ENCODE measurements at regions of chr7 and their contacts with region 1.

Region 1: DNA sequence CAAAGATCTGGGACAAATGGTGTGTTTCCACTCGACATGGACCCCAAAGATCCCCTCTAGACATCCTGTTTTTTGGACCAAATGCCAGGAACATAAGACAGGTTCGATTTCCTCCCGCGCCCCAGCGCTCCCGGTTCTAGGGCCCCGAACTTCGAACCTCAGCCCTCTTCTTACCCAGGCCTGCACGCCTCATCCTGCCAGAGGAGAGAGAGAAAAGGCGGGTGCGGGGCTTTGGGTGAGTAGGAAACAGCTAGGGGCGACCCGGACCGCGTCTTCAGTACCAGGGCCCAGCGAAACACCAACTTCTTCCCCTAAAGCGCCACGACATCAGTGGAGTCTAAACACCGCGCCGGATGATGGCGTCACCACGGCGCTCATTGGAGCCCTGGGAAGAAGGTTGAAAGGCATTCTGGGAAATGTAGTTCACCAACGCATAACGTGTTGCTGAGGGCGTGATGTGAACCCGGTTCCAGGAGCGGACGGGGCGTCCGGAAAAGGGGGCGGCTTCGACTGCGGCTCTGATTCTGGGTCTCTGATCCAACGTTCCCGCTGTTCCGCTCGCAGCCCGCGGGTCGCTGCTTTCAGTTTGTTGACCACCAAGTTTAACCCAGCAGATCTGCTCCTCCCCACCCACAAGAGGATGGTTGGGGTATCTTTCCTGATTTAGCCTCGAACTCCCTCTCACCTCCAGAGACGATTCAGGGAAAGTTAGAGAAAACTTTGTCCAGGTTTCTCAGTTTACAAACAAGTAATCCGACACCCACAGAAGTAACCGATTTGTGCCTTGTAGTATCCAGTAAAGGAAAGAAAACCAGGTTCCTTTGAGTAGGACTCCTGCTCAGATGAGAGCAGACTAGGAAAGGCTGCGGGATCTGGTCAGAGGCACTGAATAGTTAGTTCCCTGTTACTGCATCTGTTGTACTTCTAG is at the start of gene BET1:
- DNase-seq: peak; percentile 95
- ATAC-seq: peak; percentile 96
- H3K4me3 Mint-ChIP-seq: peak within 1 kb of the TSS; percentile 98
- H3K27ac Mint-ChIP-seq: peak within 1 kb of the TSS; percentile 97
- H3K4me1 Mint-ChIP-seq: peaks cover 36% of the 10 kb centered on the region
- H3K27me3 Mint-ChIP-seq: peaks cover 6% of the 10 kb centered on the region
- total RNA-seq, gene BET1: 16.9 to 19.8 TPM

Region 2: GRCh38 chr7:92134271-92135051 is 1869.8 kb before region 1 on chr7 and contains the start of gene CYP51A1:
- CTCF ChIA-PET with region 1: no interaction called
- POLR2A ChIA-PET with region 1: no interaction called
- intact Hi-C with region 1: loop called in 1 of 2 experiments (anchors 10 kb)
- DNase-seq: peak; percentile 94
- ATAC-seq: peak; percentile 92
- H3K4me3 Mint-ChIP-seq: peak within 1 kb of the TSS; percentile 98
- H3K27ac Mint-ChIP-seq: peak within 1 kb of the TSS; percentile 99
- H3K4me1 Mint-ChIP-seq: peaks cover 20% of the 10 kb centered on the region
- H3K27me3 Mint-ChIP-seq: no peaks in the 10 kb centered on the region
- total RNA-seq, gene CYP51A1: 57.8 to 63.3 TPM

Region 3: GRCh38 chr7:92245487-92246362 is 1758.6 kb before region 1 on chr7 and contains the starts of genes ANKIB1 and KRIT1:
- CTCF ChIA-PET with region 1: no interaction called
- POLR2A ChIA-PET with region 1: no interaction called
- intact Hi-C with region 1: loop called in 1 of 2 experiments (anchors 10 kb)
- DNase-seq: peak; percentile 93
- ATAC-seq: peak; percentile 81
- H3K4me3 Mint-ChIP-seq: peak within 1 kb of the TSS; percentile 97
- H3K27ac Mint-ChIP-seq: peak within 1 kb of the TSS; percentile 98
- H3K4me1 Mint-ChIP-seq: peaks cover 26% of the 10 kb centered on the region
- H3K27me3 Mint-ChIP-seq: no peaks in the 10 kb centered on the region
- total RNA-seq, gene ANKIB1: 37.0 to 55.1 TPM
- total RNA-seq, gene KRIT1: 37.7 to 45.5 TPM

Region 4: DNA sequence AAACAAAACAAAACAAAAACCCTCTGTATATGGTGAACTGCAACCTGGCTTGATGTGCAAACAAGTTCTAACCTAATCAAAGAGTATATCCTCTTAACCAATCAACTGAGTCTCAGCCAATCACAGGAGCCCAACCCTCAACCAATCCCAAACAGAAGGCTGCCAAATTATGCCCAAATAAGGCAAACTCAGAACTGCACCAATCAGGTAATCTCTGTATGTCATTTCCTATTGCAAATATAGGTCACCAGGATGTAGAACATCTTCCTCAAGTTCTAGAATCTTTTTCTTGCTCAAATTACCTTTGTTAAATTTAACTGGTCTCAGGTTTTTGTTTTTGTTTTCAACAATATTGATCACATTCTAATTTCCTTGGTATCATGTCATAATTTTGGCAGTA is 1419.3 kb before region 1 on chr7:
- CTCF ChIA-PET with region 1: no interaction called
- POLR2A ChIA-PET with region 1: no interaction called
- intact Hi-C with region 1: loop called in 1 of 2 experiments (anchors 10 kb)
- DNase-seq: peak; percentile 20
- ATAC-seq: peak; percentile 20
- H3K4me3 Mint-ChIP-seq: no peak overlapping the region
- H3K27ac Mint-ChIP-seq: peak overlapping the region; percentile 83
- H3K4me1 Mint-ChIP-seq: peaks cover 65% of the 10 kb centered on the region
- H3K27me3 Mint-ChIP-seq: no peaks in the 10 kb centered on the region

Region 5: DNA sequence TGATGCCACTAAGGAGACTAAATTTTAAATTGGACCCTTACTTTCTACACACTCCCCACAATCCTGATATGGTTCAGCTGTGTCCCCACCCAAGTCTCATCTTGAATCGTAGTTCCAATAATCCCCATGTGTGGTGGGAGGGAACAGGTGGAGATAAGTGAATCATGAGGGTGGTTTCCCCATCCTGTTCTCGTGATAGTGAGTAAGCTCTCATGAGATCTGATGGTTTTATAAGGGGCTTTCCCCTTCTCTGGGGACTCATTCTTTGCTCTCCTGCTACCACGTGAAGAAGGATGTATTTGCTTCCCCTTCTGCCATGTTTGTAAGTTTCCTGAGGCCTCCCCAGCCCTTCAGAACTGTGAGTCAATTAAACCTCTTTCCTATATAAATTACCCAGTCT is 18.3 kb after region 1 on chr7:
- CTCF ChIA-PET with region 1: no interaction called
- POLR2A ChIA-PET with region 1: no interaction called
- intact Hi-C with region 1: loop called (anchors 1 to 2 kb)
- DNase-seq: peak; percentile 24
- ATAC-seq: peak; percentile 98
- H3K4me3 Mint-ChIP-seq: no peak overlapping the region
- H3K27ac Mint-ChIP-seq: no peak overlapping the region
- H3K4me1 Mint-ChIP-seq: peaks cover 12% of the 10 kb centered on the region
- H3K27me3 Mint-ChIP-seq: peaks cover 14% of the 10 kb centered on the region

Region 6: DNA sequence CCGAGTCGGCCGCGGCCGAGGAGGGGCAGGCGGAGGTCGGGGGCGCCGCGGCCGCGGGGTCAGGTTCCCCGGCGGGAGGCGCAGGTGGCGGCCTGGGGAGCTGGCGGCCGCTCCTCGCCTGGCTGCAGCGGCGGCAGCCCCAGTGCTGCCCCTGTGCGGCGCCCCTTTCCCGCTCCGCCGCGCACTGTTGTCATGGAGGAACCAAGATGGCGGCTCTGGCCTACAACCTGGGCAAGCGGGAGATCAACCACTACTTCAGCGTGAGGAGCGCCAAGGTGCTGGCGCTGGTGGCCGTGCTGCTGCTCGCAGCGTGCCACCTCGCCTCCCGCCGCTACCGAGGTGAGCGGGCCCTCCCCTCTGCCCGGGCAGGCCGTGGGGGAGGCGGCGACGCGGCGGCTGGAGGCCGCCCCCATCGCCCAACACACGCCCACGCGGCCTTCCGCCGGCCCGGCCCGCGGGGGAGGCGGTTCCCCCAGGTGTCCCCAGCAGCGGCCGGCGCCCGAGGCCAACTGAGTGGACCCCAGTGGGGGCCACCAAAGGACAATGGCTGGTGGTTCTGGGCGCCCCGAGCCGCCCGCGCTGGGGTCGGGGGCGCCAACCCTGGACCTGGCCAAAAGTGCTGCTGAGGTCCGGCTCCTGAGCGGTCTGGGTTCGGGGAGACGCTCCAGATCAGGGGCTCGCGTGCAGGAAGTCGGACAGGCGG is 505.7 kb after region 1 on chr7:
- CTCF ChIA-PET with region 1: no interaction called
- POLR2A ChIA-PET with region 1: no interaction called
- intact Hi-C with region 1: loop called in 1 of 2 experiments (anchors 2 kb)
- DNase-seq: peak; percentile 81
- ATAC-seq: peak; percentile 77
- H3K4me3 Mint-ChIP-seq: peak overlapping the region; percentile 80
- H3K27ac Mint-ChIP-seq: peak overlapping the region; percentile 93
- H3K4me1 Mint-ChIP-seq: peaks cover 43% of the 10 kb centered on the region
- H3K27me3 Mint-ChIP-seq: no peaks in the 10 kb centered on the region

Region 7: GRCh38 chr7:94657771-94658693 is 653.7 kb after region 1 on chr7:
- CTCF ChIA-PET with region 1: no interaction called
- POLR2A ChIA-PET with region 1: no interaction called
- intact Hi-C with region 1: loop called in 1 of 2 experiments (anchors 5 kb)
- DNase-seq: peak; percentile 96
- ATAC-seq: peak; percentile 89
- H3K4me3 Mint-ChIP-seq: peak overlapping the region; percentile 67
- H3K27ac Mint-ChIP-seq: no peak overlapping the region
- H3K4me1 Mint-ChIP-seq: peaks cover 20% of the 10 kb centered on the region
- H3K27me3 Mint-ChIP-seq: peaks cover 20% of the 10 kb centered on the region

Measured in activated CD4-positive, alpha-beta T cell treated with anti-CD3 and anti-CD28 coated beads for 36 hours (primary cell).